ENCODE measurements at regions of chr2 and their contacts with region 1.

Region 1: GRCh38 chr2:120343433-120344105 is 2.4 kb upstream of the INHBB start:
- DNase-seq: peak; percentile 68
- ATAC-seq: peak; percentile 89
- H3K4me3 ChIP-seq: peak overlapping the region in 1 of 3 experiments; percentile 36; a peak in 1 of 6 replicates
- H3K27ac ChIP-seq: no peak overlapping the region
- H3K4me1 ChIP-seq: peaks cover 34% of the 10 kb centered on the region
- H3K27me3 ChIP-seq: peaks cover 25 to 88% of the 10 kb centered on the region in 2 experiments; a peak in 4 of 5 replicates
- CTCF ChIP-seq: peak; percentile 97
- EP300 ChIP-seq: no peak
- POLR2A ChIP-seq: no peak
- RAD21 ChIP-seq: peak; percentile 100

Region 2: DNA sequence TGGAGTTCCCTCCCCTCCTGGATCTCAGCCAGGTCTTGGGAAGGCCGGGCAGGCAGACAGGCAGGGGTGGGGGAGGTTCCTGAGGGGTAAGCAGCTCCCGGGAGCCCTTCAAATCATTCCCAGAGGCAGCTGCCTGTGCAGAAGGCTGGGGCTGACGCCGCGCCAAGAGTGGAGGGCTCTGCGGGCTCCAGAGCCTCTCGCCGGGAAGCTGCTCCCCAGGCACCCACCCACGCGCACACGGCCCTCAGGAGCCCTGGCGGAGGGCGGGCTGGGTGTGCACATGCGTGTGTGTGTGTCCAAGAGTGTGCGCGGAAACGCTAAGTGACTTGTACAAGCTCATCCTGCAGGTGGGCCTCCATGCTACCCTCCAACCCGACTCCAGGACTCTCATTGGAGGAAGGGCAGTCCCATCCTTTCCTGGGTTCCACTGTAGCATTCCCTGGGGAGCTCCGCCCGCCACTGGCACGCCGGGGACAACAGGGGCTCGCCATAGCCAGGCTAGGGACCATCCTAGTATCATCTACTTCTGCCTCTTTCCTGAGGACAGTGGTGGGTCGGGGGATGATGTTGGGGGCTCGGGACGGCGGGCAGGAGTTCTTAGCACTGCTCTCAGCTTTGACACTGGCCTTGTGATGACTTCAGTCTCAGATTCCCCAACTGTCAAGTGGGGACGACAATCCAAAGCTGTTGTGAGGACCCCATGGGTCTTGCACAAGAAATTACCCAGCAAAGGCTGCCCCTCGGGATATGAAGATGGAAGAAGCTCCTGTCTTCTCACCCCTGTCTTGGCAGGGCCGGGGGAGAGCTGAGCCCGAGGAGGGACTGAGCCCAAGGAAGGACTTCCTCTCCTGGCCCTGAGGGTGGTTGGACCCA is 52.7 kb after region 1 on chr2:
- CTCF ChIA-PET with region 1: no interaction called
- POLR2A ChIA-PET with region 1: no interaction called
- in situ Hi-C with region 1: loop called (anchors 5 kb)
- intact Hi-C with region 1: no loop called
- DNase-seq: peak; percentile 44
- ATAC-seq: no peak
- H3K4me3 ChIP-seq: no peak overlapping the region
- H3K27ac ChIP-seq: no peak overlapping the region
- H3K4me1 ChIP-seq: peaks cover 60% of the 10 kb centered on the region
- H3K27me3 ChIP-seq: peaks cover 0 to 3% of the 10 kb centered on the region in 2 experiments; a peak in 2 of 5 replicates
- CTCF ChIP-seq: no peak
- EP300 ChIP-seq: no peak
- POLR2A ChIP-seq: no peak
- RAD21 ChIP-seq: no peak

Region 3: GRCh38 chr2:120436885-120437603 is 93.5 kb after region 1 on chr2:
- CTCF ChIA-PET with region 1: interaction called, 39 read pairs
- POLR2A ChIA-PET with region 1: interaction called, 5 read pairs
- in situ Hi-C with region 1: loop called (anchors 5 kb)
- intact Hi-C with region 1: loop called (anchors 1 kb)
- DNase-seq: peak; percentile 80
- ATAC-seq: peak; percentile 80
- H3K4me3 ChIP-seq: no peak overlapping the region
- H3K27ac ChIP-seq: no peak overlapping the region
- H3K4me1 ChIP-seq: peaks cover 27% of the 10 kb centered on the region
- H3K27me3 ChIP-seq: peaks cover 23 to 80% of the 10 kb centered on the region in 2 experiments
- CTCF ChIP-seq: peak; percentile 82
- EP300 ChIP-seq: no peak
- POLR2A ChIP-seq: no peak
- RAD21 ChIP-seq: peak; percentile 95

Region 4: DNA sequence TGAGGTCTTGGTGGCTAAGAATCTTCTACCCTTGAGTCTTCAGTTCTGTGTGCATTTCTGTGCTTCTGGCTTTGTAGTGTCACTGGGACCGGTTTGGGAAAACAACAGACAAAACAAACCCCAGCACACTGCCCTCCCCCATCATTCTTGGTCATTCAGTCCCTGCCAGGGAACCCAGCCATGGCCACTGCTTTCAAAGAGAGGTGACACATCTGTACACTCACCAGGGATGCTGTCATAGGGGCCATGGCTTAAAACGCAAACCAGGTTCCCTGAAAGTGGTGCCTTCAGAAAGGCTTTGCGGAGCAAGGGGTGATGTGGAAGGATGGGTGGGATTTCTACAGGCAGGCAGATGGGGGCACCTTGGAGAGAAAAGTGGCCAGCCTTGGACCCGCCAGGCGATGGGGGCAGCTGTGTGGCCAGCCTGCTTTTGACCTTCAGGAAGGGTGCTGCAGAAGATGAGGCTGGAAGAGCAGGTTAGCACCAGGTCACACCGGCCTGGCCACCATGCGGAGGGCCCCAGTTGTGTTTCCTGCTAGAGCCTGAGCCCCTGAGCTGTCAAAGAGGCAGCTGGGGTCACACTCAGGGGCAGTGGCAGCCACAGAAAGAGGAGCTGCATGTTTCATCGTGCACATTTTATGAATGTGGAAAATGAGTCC is 103.7 kb after region 1 on chr2:
- CTCF ChIA-PET with region 1: no interaction called
- POLR2A ChIA-PET with region 1: no interaction called
- in situ Hi-C with region 1: no loop called
- intact Hi-C with region 1: no loop called
- DNase-seq: no peak
- ATAC-seq: no peak
- H3K4me3 ChIP-seq: no peak overlapping the region
- H3K27ac ChIP-seq: no peak overlapping the region
- H3K4me1 ChIP-seq: peaks cover 14% of the 10 kb centered on the region
- H3K27me3 ChIP-seq: peaks cover 17 to 87% of the 10 kb centered on the region in 2 experiments; a peak in 4 of 5 replicates
- CTCF ChIP-seq: no peak
- EP300 ChIP-seq: no peak
- POLR2A ChIP-seq: no peak
- RAD21 ChIP-seq: no peak

Region 5: GRCh38 chr2:120511947-120512710 is 168.6 kb after region 1 on chr2:
- CTCF ChIA-PET with region 1: no interaction called
- POLR2A ChIA-PET with region 1: interaction called, 3 read pairs
- in situ Hi-C with region 1: loop called (anchors 10 kb)
- intact Hi-C with region 1: loop called (anchors 5 kb)
- DNase-seq: no peak
- ATAC-seq: peak; percentile 43
- H3K4me3 ChIP-seq: no peak overlapping the region
- H3K27ac ChIP-seq: no peak overlapping the region
- H3K4me1 ChIP-seq: peaks cover 35% of the 10 kb centered on the region
- H3K27me3 ChIP-seq: peaks cover 10 to 38% of the 10 kb centered on the region in 2 experiments; a peak in 4 of 5 replicates
- CTCF ChIP-seq: peak; percentile 68
- EP300 ChIP-seq: no peak
- POLR2A ChIP-seq: no peak
- RAD21 ChIP-seq: peak; percentile 55

Region 6: DNA sequence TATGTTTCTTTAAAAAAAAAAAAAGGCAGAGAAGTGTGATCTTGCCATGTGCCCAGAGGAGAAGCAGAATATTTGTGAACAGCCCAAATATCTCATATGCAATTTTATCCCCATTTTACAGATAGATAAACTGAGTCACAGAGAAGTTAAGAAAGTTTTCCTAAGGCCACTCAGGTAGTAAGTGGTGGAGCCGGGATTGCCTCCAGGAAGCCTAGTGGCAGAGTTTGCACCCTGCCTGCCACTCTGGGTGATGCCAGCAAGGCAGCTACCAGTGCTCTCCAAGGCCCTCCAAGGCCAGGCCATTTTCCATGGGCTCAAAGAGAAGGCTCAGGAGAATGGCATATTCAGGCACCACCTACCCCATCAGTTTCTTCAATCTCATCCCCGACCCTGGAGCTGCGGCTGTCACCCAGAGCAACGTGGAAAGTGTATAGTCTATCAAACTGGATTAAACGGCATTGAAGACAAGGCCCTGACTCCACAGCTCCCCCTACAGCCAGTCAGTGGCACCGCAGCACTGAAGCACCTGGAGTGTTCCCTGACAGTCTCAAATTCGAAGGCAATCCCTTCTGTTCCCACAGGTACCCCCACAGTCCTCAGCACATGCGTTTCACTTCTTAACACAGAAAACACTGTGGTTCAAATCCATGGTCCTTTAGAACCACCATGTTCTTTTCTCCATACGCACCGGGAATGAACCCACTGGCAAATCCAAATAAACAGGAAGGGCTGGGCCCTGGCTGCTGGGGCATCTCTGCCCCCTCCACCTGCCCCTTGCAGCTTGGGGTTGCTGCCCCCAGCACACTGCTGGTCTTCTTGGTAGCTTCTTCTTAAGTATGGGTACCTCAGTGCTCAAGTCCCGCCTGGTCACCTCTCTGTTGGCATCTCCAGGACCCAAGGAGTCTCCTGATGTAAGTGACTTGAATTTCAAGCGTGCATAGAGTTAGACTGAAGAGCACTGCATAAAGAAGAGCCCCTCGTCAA is 177.7 kb after region 1 on chr2:
- CTCF ChIA-PET with region 1: interaction called, 6 read pairs
- POLR2A ChIA-PET with region 1: no interaction called
- in situ Hi-C with region 1: loop called (anchors 10 kb)
- intact Hi-C with region 1: loop called (anchors 5 kb)
- DNase-seq: peak; percentile 60
- ATAC-seq: peak; percentile 37
- H3K4me3 ChIP-seq: no peak overlapping the region
- H3K27ac ChIP-seq: no peak overlapping the region
- H3K4me1 ChIP-seq: peaks cover 72% of the 10 kb centered on the region
- H3K27me3 ChIP-seq: peaks cover 0 to 5% of the 10 kb centered on the region in 2 experiments; a peak in 1 of 5 replicates
- CTCF ChIP-seq: peak; percentile 77
- EP300 ChIP-seq: no peak
- POLR2A ChIP-seq: no peak
- RAD21 ChIP-seq: peak; percentile 80

Region 7: DNA sequence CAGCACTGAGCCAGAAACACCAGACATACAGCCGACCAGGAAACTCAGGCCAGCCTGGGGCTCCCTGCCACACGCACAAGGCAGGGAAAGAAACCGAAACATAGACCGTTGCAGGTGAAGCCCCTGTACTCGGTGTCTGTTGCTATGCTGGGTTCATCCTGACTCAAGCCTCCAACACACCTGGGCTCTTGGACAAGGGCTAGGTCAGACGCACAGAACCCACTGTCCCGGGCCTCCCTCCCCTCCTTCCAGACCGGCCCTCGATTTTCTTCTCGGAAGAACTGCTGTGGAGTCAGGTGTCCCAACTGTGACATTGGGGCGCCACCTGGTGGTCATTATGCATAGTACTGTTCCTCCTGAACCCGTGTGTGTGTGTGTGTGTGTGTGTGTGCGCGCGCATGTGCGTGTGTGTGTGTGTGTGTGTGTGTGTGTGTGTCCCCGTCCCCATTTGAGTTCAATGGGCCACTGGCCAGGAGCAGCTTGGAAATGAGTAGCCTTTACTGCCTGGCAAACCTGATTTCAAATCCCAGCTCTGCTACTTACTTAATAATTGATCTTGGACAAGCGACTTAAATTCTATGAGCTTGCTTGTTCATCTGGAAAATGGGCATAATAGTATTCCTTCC is 336.7 kb after region 1 on chr2:
- CTCF ChIA-PET with region 1: interaction called, 18 read pairs
- POLR2A ChIA-PET with region 1: no interaction called
- in situ Hi-C with region 1: loop called (anchors 5 kb)
- intact Hi-C with region 1: loop called (anchors 1 kb)
- DNase-seq: peak; percentile 82
- ATAC-seq: peak; percentile 85
- H3K4me3 ChIP-seq: no peak overlapping the region
- H3K27ac ChIP-seq: no peak overlapping the region
- H3K4me1 ChIP-seq: peaks cover 5% of the 10 kb centered on the region; the same call in 1 of the 2 replicates
- H3K27me3 ChIP-seq: peaks cover 2 to 63% of the 10 kb centered on the region in 2 experiments; a peak in 3 of 5 replicates
- CTCF ChIP-seq: peak; percentile 93
- EP300 ChIP-seq: no peak
- POLR2A ChIP-seq: no peak
- RAD21 ChIP-seq: peak; percentile 88

Measured in HepG2 (cell line).